ENCODE measurements at regions of chr7 and their contacts with region 1.

Region 1: DNA sequence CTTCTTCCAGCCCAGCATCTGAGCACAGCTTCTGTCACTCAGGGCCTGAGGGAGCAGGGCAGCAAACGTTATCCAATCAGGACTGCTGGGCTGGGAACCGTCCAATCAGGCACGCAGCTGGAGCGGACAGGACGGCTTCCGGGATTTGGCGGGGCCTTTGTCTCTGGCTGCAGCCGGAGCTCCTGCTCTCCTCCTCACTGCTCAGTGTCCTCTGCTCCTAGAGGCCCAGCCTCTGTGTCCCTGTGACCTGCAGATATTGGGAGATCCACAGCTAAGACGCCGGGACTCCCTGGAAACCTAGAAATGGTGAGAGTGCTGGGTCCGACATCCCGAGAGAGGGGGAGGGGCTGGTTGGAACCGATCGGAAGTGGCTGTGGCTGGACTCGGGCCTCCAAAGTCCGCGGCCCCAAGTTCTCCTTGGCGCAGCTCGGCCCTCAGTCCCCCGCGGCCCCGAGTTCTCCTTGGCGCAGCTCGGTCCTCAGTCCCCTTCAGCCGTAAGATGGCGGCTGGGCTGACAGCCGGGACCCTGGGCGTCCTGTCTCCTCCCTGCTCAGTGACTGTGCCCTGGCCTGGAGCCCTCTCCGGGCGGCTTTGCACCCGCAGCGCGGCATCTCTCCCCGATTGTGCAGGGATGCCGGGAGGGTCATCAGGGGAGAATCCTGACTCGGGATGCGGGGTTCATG is at the start of gene ZNF107:
- DNase-seq: peak; percentile 96 to 97
- ATAC-seq: peak; percentile 100
- H3K4me3 ChIP-seq: peak within 1 kb of the TSS; percentile 46 to 97
- H3K27ac ChIP-seq: peak within 1 kb of the TSS in 1 of 2 donors; percentile 76
- H3K4me1 ChIP-seq: no peaks in the 10 kb centered on the region
- H3K27me3 ChIP-seq: no peaks in the 10 kb centered on the region
- total RNA-seq, gene ZNF107: 7.1 to 9.5 TPM

Region 2: GRCh38 chr7:64794171-64794844 is 128.2 kb after region 1 on chr7 and contains the start of gene ZNF138:
- intact Hi-C with region 1: loop called in 1 of 2 experiments (anchors 10 kb)
- DNase-seq: peak; percentile 97 to 98
- ATAC-seq: peak; percentile 99
- H3K4me3 ChIP-seq: peak within 1 kb of the TSS; percentile 58 to 62
- H3K27ac ChIP-seq: peak within 1 kb of the TSS in 1 of 2 donors; percentile 43
- H3K4me1 ChIP-seq: no peaks in the 10 kb centered on the region
- H3K27me3 ChIP-seq: no peaks in the 10 kb centered on the region
- total RNA-seq, gene ZNF138: 6.1 to 9.2 TPM

Region 3: DNA sequence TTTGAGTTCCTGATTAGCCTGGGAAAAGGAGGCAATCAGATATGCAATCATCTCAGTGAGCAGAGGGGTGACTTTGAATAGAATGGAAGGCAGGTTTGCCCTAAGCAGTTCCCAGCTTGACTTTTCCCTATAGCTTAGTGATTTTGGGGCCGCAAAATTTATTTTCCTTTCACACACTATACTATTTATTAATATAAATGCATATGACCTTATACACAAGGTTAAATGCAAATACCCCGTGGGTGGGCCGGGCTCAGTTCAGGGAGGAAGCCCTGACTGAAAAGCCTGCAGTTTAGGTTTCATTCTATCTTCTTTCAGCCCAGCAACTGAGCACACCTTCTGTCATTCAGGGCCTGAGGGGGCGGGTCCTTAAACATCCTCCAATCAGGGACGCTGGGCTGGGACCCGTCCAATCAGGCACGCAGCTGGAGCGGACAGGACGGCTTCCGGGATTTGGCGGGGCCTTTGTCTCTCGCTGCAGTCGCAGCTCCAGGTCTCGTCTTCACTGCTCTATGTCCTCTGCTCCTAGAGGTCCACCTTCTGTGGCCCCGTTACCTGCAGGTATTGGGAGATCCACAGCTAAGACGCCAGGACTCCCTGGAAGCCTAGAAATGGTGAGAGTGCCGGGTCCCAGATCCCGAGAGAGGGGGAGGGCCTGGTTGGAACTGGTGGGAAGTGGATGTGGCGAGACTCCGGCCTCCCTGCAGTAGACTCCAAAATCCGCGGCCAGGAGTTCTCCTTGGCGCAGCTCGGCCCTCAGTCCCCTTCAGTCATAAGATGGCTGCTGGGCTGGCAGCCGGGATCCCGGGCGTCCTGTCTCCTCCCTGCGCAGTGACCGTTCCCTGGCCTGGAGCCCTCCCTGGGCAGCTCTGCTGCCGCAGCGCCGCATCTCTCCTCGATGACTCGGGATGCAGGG is 236.9 kb after region 1 on chr7 and contains the start of gene ZNF273:
- intact Hi-C with region 1: loop called in 1 of 2 experiments (anchors 10 kb)
- DNase-seq: peak; percentile 96 to 97
- ATAC-seq: peak; percentile 96
- H3K4me3 ChIP-seq: peak within 1 kb of the TSS; percentile 70 to 87
- H3K27ac ChIP-seq: peak within 1 kb of the TSS; percentile 2 to 72
- H3K4me1 ChIP-seq: no peaks in the 10 kb centered on the region
- H3K27me3 ChIP-seq: no peaks in the 10 kb centered on the region
- total RNA-seq, gene ZNF273: 4.7 to 15.7 TPM